ENCODE measurements at regions of chr12 and their contacts with region 1.

Region 1: DNA sequence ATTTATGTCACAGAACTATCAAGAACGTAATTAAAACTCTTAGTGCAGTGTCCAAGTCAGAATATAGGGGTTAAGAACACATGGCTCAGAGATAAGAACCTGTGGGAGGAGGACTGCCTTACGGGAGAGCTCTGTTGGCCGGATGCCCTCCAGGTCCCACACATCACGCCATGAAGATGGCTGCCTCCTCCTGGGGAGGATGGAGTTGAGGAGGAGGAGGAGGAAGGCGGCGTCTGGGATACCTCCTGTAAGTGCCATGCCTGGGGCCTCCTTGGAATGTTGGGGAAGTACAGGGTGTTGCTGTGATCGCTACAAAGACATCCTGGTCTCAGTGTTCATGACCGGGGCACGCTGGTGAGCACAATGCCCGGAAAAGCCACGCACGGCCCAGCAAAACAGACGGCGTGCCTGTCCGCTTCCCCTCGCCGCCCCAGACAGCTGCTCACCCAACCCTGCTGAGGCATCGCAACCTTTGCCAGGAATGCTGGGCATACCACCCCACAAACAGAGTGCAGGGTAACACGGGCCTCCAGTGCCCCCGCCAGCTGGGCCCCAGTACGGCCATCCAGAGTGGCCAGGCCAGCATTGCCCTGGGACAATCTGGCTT is 28.7 kb upstream of the CD9 start:
- DNase-seq: no peak
- ATAC-seq: peak; percentile 64

Region 2: DNA sequence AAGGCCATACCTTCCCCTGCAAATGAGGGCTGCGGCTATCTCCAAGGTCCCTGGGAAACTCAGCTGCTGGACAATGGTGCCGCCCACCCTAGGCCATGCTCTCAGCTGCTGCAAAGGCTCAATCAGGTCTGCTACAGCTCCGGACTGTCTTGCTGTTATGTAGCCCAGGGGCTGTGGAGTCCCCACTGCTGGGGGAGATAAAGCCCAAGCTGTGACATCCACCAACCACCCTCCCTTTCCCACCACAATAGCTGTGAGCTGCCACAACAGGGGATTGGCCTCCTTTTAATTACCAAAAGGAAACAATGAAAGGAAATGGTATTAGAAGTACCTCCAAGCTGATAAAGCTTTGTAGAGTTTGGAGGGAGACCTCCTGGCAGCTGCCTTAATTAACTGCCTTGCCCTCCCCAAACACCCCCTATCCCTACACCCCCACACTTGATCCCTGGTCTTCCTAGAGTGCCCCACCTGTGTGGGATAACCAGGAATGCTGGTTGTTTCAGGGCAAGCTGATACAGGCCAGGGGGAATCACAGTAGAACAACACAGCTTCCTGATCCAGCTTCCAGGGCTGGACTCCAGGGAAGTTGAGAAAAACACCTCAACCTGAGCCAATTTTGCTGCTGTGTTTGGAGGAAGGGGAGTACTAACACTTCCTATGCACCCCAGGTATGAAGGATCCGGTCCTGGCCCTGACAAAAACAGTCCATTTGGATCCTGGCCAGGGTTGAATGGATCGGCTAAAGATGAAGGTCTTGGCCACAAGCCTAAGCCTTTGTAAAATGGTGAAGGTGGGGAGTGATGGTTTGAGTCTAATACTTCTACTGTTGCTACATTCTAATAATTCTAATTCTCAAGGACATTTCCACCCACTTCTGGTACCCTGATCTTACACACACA is 46.9 kb before region 1 on chr12 and contains the start of gene VWF:
- intact Hi-C with region 1: loop called (anchors 1 kb)
- DNase-seq: no peak
- ATAC-seq: peak; percentile 42
- total RNA-seq, gene VWF: 244 TPM

Region 3: DNA sequence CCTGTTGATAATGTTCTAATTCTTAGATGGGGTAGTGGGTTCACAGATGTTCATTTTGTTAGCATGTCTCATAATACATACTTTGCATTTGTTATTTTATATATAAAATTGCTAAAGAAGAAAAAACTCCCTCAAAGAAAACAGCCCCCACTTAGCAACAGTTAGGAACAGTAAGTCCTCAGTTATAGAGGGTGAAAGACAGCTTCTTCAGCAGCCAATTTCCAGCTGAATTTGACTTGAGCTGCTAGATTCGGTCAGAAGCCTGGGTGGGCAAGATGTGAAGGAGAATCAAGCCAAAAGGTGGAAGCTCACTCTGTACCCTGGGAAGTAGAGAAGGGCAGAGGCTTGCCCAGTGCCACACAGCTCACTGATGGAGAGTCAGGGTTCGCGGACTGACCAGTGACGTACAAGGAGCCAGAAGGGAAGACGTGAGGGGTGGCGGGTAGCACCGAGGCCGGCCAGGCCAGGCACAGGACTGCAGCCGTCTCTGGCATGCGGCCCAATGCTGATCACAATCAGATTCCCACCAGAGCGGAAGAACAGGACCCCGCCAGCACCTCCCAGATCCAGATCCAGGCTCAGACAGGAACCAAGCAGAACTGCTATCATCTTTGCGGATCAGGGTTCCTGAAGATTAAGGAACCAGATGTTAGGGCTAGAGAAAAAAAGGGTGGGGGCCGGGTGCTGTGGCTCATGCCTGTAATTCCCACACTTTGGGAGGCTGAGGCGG is 16.6 kb before region 1 on chr12:
- intact Hi-C with region 1: loop called (anchors 1 kb)
- DNase-seq: peak; percentile 82
- ATAC-seq: peak; percentile 68

Region 4: DNA sequence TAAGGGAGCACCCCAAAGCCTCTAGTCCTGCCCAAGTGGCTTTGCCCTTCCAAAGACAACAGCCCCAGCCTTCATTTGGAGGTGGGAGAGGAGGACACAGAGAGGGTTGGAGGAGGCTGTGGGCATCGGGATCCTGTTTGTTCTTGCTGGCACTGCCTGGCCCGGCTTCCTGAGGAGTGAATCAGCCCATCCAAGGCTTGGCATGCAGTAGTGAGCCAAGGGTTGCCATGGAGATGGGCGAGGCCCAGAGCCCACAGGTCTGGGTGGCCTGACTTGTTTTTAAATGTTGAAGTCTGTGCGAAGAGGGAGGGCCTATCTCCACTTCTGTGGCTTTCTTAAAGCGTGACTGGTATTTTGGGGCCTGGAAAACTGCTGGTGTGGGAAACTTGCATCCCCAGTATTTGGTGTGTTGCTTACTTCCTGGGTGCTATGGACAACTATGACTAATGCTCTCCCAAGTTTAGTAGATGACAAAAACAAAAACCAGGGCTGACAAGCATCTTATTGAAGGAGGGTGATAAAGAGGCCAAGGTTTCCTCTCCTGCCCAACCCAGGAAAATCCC is 44.5 kb after region 1 on chr12:
- intact Hi-C with region 1: no loop called
- DNase-seq: no peak
- ATAC-seq: no peak

Measured in Right ventricle myocardium inferior (tissue), 1 donor.